Caco-2 (cell line): ENCODE measurements at regions of chr6 and their contacts with region 1.

Region 1: DNA sequence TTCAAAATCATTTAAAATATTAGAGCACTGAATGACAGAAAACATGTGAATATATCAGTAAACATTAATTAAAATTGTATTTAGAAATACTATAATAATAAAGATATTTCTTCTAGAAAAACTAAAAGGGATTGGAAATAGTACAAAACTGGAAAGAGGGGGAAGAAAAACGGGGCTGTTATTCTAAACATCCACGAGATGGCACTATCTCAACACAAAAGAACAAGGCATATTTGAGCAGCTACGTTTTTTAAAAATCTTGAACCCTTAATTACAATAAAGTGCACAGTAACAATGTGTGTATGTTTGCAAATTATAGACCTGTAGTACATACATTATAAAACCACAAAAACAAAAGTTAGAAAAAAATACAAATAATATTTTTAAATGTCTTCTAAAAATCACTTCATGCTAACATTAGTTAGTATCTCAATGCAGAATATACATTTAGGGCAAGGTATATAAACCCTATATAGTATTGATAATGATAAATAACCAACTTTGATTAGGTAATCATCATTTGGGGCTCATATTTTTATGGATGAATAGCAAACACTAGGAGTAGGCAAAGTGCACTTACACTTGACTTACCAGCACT is 42.5 kb upstream of the PNISR start:
- DNase-seq: no peak
- H3K4me3 ChIP-seq: no peak overlapping the region
- H3K4me3 Mint-ChIP-seq: no peak overlapping the region
- H3K27ac Mint-ChIP-seq: no peak overlapping the region
- H3K4me1 ChIP-seq: no peaks in the 10 kb centered on the region
- H3K4me1 Mint-ChIP-seq: no peaks in the 10 kb centered on the region
- H3K27me3 ChIP-seq: no peaks in the 10 kb centered on the region
- H3K27me3 Mint-ChIP-seq: no peaks in the 10 kb centered on the region
- CTCF ChIP-seq: peak; percentile 60 to 61

Region 2: GRCh38 chr6:99349171-99350141 is 118.2 kb before region 1 on chr6 and contains the start of gene FAXC:
- CTCF ChIA-PET with region 1: no interaction called
- POLR2A ChIA-PET with region 1: no interaction called
- intact Hi-C with region 1: no loop called
- DNase-seq: peak; percentile 47 to 68
- H3K4me3 ChIP-seq: peak within 1 kb of the TSS; percentile 50
- H3K4me3 Mint-ChIP-seq: peak within 1 kb of the TSS; percentile 56
- H3K27ac Mint-ChIP-seq: no peak within 1 kb of the TSS
- H3K4me1 ChIP-seq: no peaks in the 10 kb centered on the region
- H3K4me1 Mint-ChIP-seq: no peaks in the 10 kb centered on the region
- H3K27me3 ChIP-seq: no peaks in the 10 kb centered on the region
- H3K27me3 Mint-ChIP-seq: peaks cover 15% of the 10 kb centered on the region
- CTCF ChIP-seq: peak; percentile 29 to 42
- total RNA-seq, gene FAXC: 0.16 and 0.86 TPM in 2 replicates

Region 3: GRCh38 chr6:99613409-99613704 is 145.7 kb after region 1 on chr6:
- CTCF ChIA-PET with region 1: no interaction called
- POLR2A ChIA-PET with region 1: no interaction called
- intact Hi-C with region 1: loop called (anchors 5 kb)
- DNase-seq: peak in 1 of 2 experiments; percentile 44
- H3K4me3 ChIP-seq: peak overlapping the region; percentile 71
- H3K4me3 Mint-ChIP-seq: peak overlapping the region; percentile 83
- H3K27ac Mint-ChIP-seq: no peak overlapping the region
- H3K4me1 ChIP-seq: no peaks in the 10 kb centered on the region
- H3K4me1 Mint-ChIP-seq: no peaks in the 10 kb centered on the region
- H3K27me3 ChIP-seq: peaks cover 2% of the 10 kb centered on the region; the same call in 1 of the 2 replicates
- H3K27me3 Mint-ChIP-seq: peaks cover 18% of the 10 kb centered on the region
- CTCF ChIP-seq: no peak

Region 4: GRCh38 chr6:99746261-99746895 is 278.8 kb after region 1 on chr6:
- CTCF ChIA-PET with region 1: interaction called, 4 read pairs
- POLR2A ChIA-PET with region 1: no interaction called
- intact Hi-C with region 1: loop called (anchors 1 kb)
- DNase-seq: peak; percentile 51 to 71
- H3K4me3 ChIP-seq: no peak overlapping the region
- H3K4me3 Mint-ChIP-seq: no peak overlapping the region
- H3K27ac Mint-ChIP-seq: no peak overlapping the region
- H3K4me1 ChIP-seq: no peaks in the 10 kb centered on the region
- H3K4me1 Mint-ChIP-seq: no peaks in the 10 kb centered on the region
- H3K27me3 ChIP-seq: no peaks in the 10 kb centered on the region
- H3K27me3 Mint-ChIP-seq: peaks cover 18% of the 10 kb centered on the region
- CTCF ChIP-seq: peak; percentile 63 to 64